ENCODE measurements at regions of chr7 and their contacts with region 1.

Region 1: GRCh38 chr7:55026866-55027490 is 8.2 kb downstream of the EGFR start:
- DNase-seq: peak; percentile 71 to 92
- H3K4me3 ChIP-seq: 0 out of 2 replicates have a peak overlapping the region, but pooled peaks have one; percentile 0
- H3K27ac ChIP-seq: peak overlapping the region; percentile 66
- H3K4me1 ChIP-seq: peaks cover 85% of the 10 kb centered on the region
- H3K27me3 ChIP-seq: no peaks in the 10 kb centered on the region
- CTCF ChIP-seq: no peak

Region 2: DNA sequence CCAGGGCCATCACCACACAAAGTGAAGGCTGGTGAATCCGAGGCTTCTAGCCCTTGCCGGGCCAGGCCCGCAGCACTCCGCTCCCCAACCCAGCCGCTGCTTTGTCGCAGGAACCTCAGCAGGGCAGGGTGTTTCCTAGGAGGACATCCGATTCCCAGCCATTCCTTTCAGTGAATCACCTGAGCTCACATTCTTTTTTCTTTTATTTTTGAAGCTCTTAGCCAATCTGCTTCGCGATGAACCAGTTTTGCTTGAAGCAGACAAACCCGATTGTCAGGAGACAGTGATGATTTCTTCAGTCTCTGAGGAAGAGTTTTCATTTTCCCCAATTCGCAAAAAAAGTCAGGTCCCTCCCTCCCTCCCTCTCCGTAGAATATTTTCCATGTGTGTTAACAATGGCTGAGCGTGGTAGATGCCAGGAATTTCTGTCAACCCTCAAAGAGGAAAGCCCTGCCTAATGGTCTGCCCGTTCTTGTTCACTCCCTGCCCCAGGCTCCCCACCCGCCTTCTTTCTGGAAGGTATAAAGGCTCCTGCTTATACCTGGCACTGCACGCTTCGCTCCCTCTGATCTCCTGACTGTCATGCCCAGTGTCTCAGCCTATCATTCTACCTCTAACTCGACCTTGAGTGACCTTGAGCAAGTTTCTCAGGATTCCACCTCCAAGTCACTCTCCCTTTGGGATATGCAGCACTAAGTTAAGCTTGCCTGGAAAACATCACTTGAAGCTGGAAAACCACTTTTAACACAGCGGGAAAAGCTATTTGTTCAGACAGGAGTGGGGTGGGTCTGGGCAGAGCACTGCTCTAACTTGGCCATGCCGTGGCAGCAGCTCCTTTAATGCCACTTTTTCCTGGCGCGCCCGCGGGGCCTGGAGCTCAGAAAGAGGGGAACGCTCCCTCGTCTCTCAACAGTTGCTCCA is 26.9 kb after region 1 on chr7:
- CTCF ChIA-PET with region 1: interaction called, 4 read pairs
- POLR2A ChIA-PET with region 1: interaction called, 5 read pairs
- intact Hi-C with region 1: loop called (anchors 1 kb)
- DNase-seq: peak; percentile 90 to 98
- H3K4me3 ChIP-seq: peak overlapping the region; percentile 2; the same call in 1 of the 2 replicates
- H3K27ac ChIP-seq: peak overlapping the region; percentile 82
- H3K4me1 ChIP-seq: peaks cover 72% of the 10 kb centered on the region
- H3K27me3 ChIP-seq: no peaks in the 10 kb centered on the region
- CTCF ChIP-seq: no peak